Activated naive CD4-positive, alpha-beta T cell treated with anti-CD3 and anti-CD28 coated beads for 36 hours (primary cell): ENCODE measurements at regions of chr2 and their contacts with region 1.

Region 1: GRCh38 chr2:101831351-101831865 is 133.9 kb downstream of the MAP4K4 start:
- DNase-seq: peak; percentile 76
- H3K4me3 Mint-ChIP-seq: peak overlapping the region; percentile 7
- H3K27ac Mint-ChIP-seq: peak overlapping the region; percentile 87
- H3K4me1 Mint-ChIP-seq: peaks cover 55% of the 10 kb centered on the region
- H3K27me3 Mint-ChIP-seq: no peaks in the 10 kb centered on the region

Region 2: DNA sequence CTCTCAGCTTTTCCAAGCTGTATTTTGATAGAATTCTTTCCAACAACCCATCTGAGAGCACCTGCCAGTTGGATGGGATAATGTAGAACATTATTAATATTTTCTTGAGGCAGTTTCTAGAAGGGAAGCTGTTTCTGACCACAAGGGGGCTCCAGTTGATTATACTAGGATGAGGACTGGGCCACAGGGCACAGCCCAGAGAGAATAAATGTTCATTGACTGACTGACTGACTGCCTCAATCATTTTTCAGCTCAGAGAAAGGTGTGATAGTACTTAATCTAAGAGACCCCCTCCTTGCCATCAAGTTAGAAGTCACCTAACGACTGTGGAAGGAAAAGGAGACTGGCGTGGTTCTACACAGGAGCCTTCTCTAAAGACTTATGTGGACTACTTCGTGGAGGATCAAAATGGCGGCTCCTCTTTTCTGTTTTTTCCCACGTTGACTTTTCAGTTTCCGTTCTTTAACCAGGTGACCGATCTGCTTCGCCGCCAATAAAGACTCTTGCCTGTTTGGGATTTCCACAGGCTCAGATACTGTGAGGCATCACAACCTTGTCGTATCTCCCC is 412.2 kb before region 1 on chr2:
- CTCF ChIA-PET with region 1: interaction called, 38 read pairs
- intact Hi-C with region 1: loop called (anchors 1 kb)
- DNase-seq: peak; percentile 82
- H3K4me3 Mint-ChIP-seq: no peak overlapping the region
- H3K27ac Mint-ChIP-seq: no peak overlapping the region
- H3K4me1 Mint-ChIP-seq: no peaks in the 10 kb centered on the region
- H3K27me3 Mint-ChIP-seq: no peaks in the 10 kb centered on the region

Region 3: DNA sequence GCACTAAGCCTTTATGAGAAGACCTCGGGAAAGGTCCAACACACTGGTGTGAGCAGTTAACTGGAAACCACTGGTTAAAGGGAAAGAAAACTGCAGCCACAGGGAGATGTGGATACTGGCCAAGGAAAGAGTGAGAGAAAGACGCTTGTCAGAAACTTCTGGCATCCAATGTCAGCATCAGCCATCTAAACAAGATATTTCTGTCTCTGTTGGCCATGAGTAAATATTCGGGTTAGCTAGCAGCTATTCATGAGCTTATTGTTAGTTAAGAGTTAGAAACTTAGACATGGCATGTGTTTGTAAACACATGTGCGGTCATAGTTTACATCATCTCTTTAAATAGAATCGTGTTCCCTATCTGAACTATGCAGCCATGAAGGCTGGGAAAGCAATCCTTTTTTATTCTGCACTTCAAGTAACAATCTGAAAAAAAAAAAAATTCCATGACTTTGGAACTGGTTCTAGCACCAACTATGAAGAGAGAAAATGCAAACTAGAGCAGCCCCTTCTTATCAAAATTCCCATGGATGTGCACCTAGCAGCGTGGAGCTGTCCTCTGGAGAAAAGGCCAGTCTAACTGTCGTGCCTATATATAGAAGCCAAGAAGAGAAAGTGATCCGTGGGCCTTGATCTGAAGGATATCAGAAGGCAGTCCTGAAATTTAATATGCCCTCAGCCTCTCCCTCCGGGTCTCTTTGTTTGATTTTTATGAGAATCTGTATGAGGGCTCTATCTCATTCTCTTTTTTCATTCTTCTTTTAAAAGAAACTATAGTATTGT is 272.5 kb before region 1 on chr2:
- CTCF ChIA-PET with region 1: no interaction called
- intact Hi-C with region 1: no loop called
- DNase-seq: no peak
- H3K4me3 Mint-ChIP-seq: no peak overlapping the region
- H3K27ac Mint-ChIP-seq: no peak overlapping the region
- H3K4me1 Mint-ChIP-seq: peaks cover 30% of the 10 kb centered on the region
- H3K27me3 Mint-ChIP-seq: no peaks in the 10 kb centered on the region

Region 4: GRCh38 chr2:101623031-101623521 is 208.3 kb before region 1 on chr2:
- CTCF ChIA-PET with region 1: interaction called, 4 read pairs
- intact Hi-C with region 1: loop called (anchors 2 kb)
- DNase-seq: peak; percentile 17
- H3K4me3 Mint-ChIP-seq: peak overlapping the region; percentile 17
- H3K27ac Mint-ChIP-seq: peak overlapping the region; percentile 90
- H3K4me1 Mint-ChIP-seq: peaks cover 39% of the 10 kb centered on the region
- H3K27me3 Mint-ChIP-seq: no peaks in the 10 kb centered on the region

Region 5: GRCh38 chr2:101736861-101737291 is 94.5 kb before region 1 on chr2:
- CTCF ChIA-PET with region 1: interaction called, 6 read pairs
- intact Hi-C with region 1: loop called (anchors 1 kb)
- DNase-seq: peak; percentile 77
- H3K4me3 Mint-ChIP-seq: peak overlapping the region; percentile 8
- H3K27ac Mint-ChIP-seq: peak overlapping the region; percentile 89
- H3K4me1 Mint-ChIP-seq: peaks cover 90% of the 10 kb centered on the region
- H3K27me3 Mint-ChIP-seq: no peaks in the 10 kb centered on the region

Region 6: GRCh38 chr2:101781326-101781725 is 50.1 kb before region 1 on chr2:
- CTCF ChIA-PET with region 1: interaction called, 11 read pairs
- intact Hi-C with region 1: no loop called
- DNase-seq: no peak
- H3K4me3 Mint-ChIP-seq: peak overlapping the region; percentile 38
- H3K27ac Mint-ChIP-seq: peak overlapping the region; percentile 26
- H3K4me1 Mint-ChIP-seq: peaks cover 82% of the 10 kb centered on the region
- H3K27me3 Mint-ChIP-seq: no peaks in the 10 kb centered on the region

Region 7: GRCh38 chr2:102181919-102182635 is 350.7 kb after region 1 on chr2:
- CTCF ChIA-PET with region 1: no interaction called
- intact Hi-C with region 1: no loop called
- DNase-seq: no peak
- H3K4me3 Mint-ChIP-seq: no peak overlapping the region
- H3K27ac Mint-ChIP-seq: no peak overlapping the region
- H3K4me1 Mint-ChIP-seq: peaks cover 11% of the 10 kb centered on the region
- H3K27me3 Mint-ChIP-seq: peaks cover 15% of the 10 kb centered on the region

Region 8: GRCh38 chr2:102410952-102411351 is 579.5 kb after region 1 on chr2:
- CTCF ChIA-PET with region 1: no interaction called
- intact Hi-C with region 1: no loop called
- DNase-seq: no peak
- H3K4me3 Mint-ChIP-seq: no peak overlapping the region
- H3K27ac Mint-ChIP-seq: no peak overlapping the region
- H3K4me1 Mint-ChIP-seq: peaks cover 5% of the 10 kb centered on the region
- H3K27me3 Mint-ChIP-seq: no peaks in the 10 kb centered on the region

Region 9: DNA sequence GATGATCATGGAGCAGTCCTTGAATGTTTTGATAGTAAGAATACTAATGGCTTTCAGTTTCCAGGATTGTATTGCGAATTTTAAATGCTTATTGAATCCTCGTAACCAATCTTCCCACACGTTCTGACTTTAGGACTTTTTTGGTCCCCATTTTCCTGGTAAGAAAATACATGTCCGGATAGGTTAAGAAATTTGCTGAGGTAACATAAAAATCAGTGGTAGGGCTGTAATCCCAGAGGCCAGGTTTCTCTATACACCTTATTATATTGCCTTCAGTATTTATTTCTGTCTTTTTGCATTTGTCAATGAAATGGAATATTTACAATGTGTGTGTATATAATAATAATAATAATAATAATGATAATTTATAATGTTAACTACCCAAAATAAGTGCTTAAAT is 1533.7 kb after region 1 on chr2:
- CTCF ChIA-PET with region 1: no interaction called
- intact Hi-C with region 1: no loop called
- DNase-seq: no peak
- H3K4me3 Mint-ChIP-seq: no peak overlapping the region
- H3K27ac Mint-ChIP-seq: no peak overlapping the region
- H3K4me1 Mint-ChIP-seq: no peaks in the 10 kb centered on the region
- H3K27me3 Mint-ChIP-seq: no peaks in the 10 kb centered on the region